Activated T-helper 2 cell treated with anti-CD3 and anti-CD28 coated beads, Interferon-gamma antibody, Interleukin-2, Interleukin-4, amounts not matched to agents 10 μg/mL and 5 μg/mL and 100 μg/mL, durations not matched to agents 14 hours and 24 hours and 36 hours (primary cell): ENCODE measurements at regions of chr5 and their contacts with region 1.

Region 1: GRCh38 chr5:55307383-55308253 is at the starts of genes DHX29 and MTREX:
- DNase-seq: peak; percentile 89
- H3K4me3 Mint-ChIP-seq: no peak within 1 kb of the TSS
- H3K27ac Mint-ChIP-seq: no peak within 1 kb of the TSS
- H3K4me1 Mint-ChIP-seq: peaks cover 22% of the 10 kb centered on the region
- H3K27me3 Mint-ChIP-seq: no peaks in the 10 kb centered on the region
- total RNA-seq, gene DHX29: 17.6 and 20.0 TPM in 2 replicates
- total RNA-seq, gene MTREX: 110 and 123 TPM in 2 replicates

Region 2: GRCh38 chr5:55172051-55172899 is 135.3 kb before region 1 on chr5:
- intact Hi-C with region 1: loop called (anchors 1 kb)
- DNase-seq: peak; percentile 60
- H3K4me3 Mint-ChIP-seq: peak overlapping the region; percentile 86
- H3K27ac Mint-ChIP-seq: peak overlapping the region; percentile 36
- H3K4me1 Mint-ChIP-seq: peaks cover 34% of the 10 kb centered on the region
- H3K27me3 Mint-ChIP-seq: peaks cover 66% of the 10 kb centered on the region

Region 3: GRCh38 chr5:55232985-55233928 is 74.4 kb before region 1 on chr5 and contains the start of gene CCNO:
- intact Hi-C with region 1: loop called (anchors 5 kb)
- DNase-seq: peak; percentile 64
- H3K4me3 Mint-ChIP-seq: peak within 1 kb of the TSS; percentile 82
- H3K27ac Mint-ChIP-seq: peak within 1 kb of the TSS; percentile 17
- H3K4me1 Mint-ChIP-seq: peaks cover 27% of the 10 kb centered on the region
- H3K27me3 Mint-ChIP-seq: peaks cover 79% of the 10 kb centered on the region
- total RNA-seq, gene CCNO: 0.27 TPM in 1 of 2 replicates, not detected in the other

Region 4: GRCh38 chr5:55344392-55344992 is 36.9 kb after region 1 on chr5:
- intact Hi-C with region 1: no loop called
- DNase-seq: peak; percentile 37
- H3K4me3 Mint-ChIP-seq: no peak overlapping the region
- H3K27ac Mint-ChIP-seq: peak overlapping the region; percentile 58
- H3K4me1 Mint-ChIP-seq: peaks cover 4% of the 10 kb centered on the region
- H3K27me3 Mint-ChIP-seq: no peaks in the 10 kb centered on the region